ENCODE measurements at regions of chr22 and their contacts with region 1.

Region 1: GRCh38 chr22:46902998-46903916 is 140.8 kb downstream of the TBC1D22A start:
- ATAC-seq: peak in 1 of 8 experiments; percentile 43
- H3K4me3 ChIP-seq: no peak overlapping the region
- H3K27ac ChIP-seq: no peak overlapping the region
- H3K4me1 ChIP-seq: no peaks in the 10 kb centered on the region

Region 2: DNA sequence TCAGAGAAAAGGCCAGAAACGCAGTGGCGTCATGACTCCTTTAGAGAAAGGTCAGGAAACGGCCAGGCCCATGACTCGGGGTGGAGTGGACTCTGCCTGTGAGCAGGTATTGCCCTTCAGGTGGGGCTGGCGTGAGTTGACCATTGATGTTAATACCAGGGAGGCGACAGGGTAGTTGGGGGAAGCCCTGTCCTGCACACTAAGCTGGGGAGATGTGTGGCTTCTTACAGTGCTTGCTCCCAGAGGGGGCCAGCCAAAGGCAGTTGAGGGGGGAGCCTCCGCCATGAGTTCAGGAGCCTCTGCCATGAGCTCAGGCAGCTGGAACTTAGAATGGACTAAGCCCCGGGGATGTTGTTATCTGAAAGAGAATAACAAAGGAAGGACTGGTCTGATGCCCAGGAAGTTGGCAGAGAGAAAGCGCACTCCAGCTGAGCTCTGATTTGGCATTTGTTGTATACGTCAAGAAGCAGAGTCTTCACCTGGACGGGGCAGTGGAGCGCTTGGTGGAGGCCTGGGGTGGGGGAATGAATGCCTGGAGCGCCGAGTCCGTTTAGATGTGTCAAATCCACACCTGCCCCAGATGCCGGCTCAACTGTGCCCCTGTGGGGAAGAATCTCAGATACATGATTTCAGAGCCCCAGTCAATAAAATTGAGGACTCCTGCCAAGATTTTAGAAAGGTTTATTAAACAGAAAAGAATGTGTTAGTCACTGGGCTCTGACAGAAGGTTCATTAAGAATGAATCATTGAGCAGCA is 81.7 kb after region 1 on chr22:
- in situ Hi-C with region 1: no loop called
- ATAC-seq: peak in 1 of 8 experiments; percentile 51
- H3K4me3 ChIP-seq: no peak overlapping the region
- H3K27ac ChIP-seq: no peak overlapping the region
- H3K4me1 ChIP-seq: no peaks in the 10 kb centered on the region

Region 3: DNA sequence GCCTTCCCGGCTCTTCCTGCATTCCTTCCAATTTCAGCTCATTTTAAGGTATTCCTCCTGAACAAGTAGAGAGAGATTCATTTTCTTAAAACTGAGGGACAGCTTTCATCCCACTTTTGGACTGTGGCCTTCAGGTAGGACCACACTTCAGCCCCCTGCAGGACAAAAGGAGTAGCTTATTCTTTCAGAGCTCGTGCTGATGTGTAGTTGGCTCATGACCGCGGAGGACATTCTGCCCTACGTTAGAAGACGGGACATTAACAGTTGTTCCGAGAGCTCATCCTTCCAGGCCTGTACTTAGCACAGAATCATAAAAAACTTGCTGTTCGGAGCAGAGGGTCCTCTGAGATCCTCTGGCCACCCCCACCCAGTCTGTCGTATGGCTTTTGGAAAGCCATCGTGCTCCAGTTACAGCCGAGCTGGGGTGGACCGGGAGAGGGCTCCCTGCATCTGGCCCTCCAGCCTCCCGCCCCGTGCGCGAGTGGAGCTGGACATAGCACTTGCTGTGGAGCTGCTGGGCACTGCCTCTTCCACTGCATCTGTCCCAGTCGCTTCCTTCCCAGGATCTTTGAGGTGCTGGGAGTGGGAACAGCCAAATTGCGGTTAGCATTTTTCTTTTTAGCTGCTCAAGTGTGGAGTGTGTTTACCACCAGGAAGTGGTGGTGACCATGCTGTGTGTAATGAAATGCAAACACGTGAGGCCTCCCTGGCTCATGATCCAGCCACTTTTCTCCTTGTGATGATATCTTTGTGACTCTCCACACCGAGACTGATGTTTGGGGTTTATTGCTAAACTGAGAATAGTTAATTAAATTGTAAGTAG is 109.5 kb after region 1 on chr22:
- in situ Hi-C with region 1: loop called in 1 of 9 experiments (anchors 25 kb)
- ATAC-seq: no peak
- H3K4me3 ChIP-seq: no peak overlapping the region
- H3K27ac ChIP-seq: no peak overlapping the region
- H3K4me1 ChIP-seq: peaks cover 10 to 33% of the 10 kb centered on the region in 2 donors